Naive thymus-derived CD8-positive, alpha-beta T cell (primary cell): ENCODE measurements at regions of chr19 and their contacts with region 1.

Region 1: DNA sequence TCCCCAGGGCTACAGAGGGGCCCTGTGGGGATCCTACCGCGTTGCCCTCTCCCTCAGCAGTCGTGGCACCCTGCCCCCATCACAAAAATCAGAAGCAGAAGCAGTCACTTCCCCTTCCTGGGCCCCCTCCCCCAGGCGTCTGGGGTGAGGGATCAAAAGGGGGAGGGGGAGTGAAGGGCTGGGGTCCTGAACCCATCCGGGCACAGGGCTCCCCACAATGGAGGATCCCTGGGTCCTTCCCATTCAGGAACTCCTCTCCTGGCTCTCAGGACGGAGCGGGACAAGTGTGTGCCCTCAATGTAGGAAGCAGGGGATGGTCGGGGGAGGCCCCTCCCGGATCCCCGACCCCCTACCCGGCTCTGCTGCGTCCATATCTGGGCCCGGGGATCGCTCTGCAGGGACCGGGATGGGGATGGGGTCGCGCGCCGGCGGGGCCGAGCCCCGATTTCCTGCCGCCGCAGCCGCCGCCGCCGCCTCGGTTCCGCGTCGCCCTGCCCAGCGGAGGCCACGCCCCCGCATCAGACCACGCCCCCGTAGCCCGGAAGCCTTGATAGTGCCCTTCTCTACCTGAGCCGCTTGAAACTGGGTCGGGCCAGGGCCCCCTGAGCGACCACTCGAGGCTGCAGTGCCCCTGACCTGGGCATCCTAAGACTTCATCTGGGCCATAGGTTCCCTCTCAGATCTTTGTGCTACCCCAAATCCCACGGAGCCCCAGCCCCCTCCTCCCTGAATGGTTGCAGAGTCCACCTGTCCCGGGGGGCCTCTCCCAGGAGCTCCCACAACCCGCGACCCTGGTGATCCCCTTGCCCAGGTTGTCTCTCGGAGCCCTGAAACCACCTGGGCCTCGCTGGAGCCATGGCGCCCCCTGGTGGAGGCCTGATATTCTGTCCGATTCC is at the start of gene GMIP:
- DNase-seq: peak; percentile 77 to 94 (median 88)
- ATAC-seq: peak; percentile 91 to 92
- H3K4me3 Mint-ChIP-seq: peak within 1 kb of the TSS; percentile 96 to 99 (median 98)
- H3K27ac Mint-ChIP-seq: peak within 1 kb of the TSS; percentile 87 to 99 (median 98)
- H3K4me1 Mint-ChIP-seq: peaks cover 13 to 27% (median 20%) of the 10 kb centered on the region in 4 donors
- H3K27me3 Mint-ChIP-seq: no peaks in the 10 kb centered on the region
- polyA plus RNA-seq, gene GMIP: 40.6 to 72.4 (median 41.9) TPM

Region 2: GRCh38 chr19:19524053-19524452 is 119.4 kb before region 1 on chr19:
- POLR2A ChIA-PET with region 1: no interaction called
- DNase-seq: no peak
- ATAC-seq: no peak
- H3K4me3 Mint-ChIP-seq: no peak overlapping the region
- H3K27ac Mint-ChIP-seq: no peak overlapping the region
- H3K4me1 Mint-ChIP-seq: peaks cover 12 to 49% (median 25%) of the 10 kb centered on the region in 4 donors
- H3K27me3 Mint-ChIP-seq: no peaks in the 10 kb centered on the region

Region 3: GRCh38 chr19:19657397-19657783 is 14.0 kb after region 1 on chr19:
- POLR2A ChIA-PET with region 1: interaction called, 45 read pairs
- DNase-seq: no peak
- ATAC-seq: no peak
- H3K4me3 Mint-ChIP-seq: no peak overlapping the region
- H3K27ac Mint-ChIP-seq: peak overlapping the region in 3 of 10 donors; percentile 5 to 48 (median 46)
- H3K4me1 Mint-ChIP-seq: peaks cover 15 to 34% (median 24%) of the 10 kb centered on the region in 4 donors
- H3K27me3 Mint-ChIP-seq: no peaks in the 10 kb centered on the region

Region 4: DNA sequence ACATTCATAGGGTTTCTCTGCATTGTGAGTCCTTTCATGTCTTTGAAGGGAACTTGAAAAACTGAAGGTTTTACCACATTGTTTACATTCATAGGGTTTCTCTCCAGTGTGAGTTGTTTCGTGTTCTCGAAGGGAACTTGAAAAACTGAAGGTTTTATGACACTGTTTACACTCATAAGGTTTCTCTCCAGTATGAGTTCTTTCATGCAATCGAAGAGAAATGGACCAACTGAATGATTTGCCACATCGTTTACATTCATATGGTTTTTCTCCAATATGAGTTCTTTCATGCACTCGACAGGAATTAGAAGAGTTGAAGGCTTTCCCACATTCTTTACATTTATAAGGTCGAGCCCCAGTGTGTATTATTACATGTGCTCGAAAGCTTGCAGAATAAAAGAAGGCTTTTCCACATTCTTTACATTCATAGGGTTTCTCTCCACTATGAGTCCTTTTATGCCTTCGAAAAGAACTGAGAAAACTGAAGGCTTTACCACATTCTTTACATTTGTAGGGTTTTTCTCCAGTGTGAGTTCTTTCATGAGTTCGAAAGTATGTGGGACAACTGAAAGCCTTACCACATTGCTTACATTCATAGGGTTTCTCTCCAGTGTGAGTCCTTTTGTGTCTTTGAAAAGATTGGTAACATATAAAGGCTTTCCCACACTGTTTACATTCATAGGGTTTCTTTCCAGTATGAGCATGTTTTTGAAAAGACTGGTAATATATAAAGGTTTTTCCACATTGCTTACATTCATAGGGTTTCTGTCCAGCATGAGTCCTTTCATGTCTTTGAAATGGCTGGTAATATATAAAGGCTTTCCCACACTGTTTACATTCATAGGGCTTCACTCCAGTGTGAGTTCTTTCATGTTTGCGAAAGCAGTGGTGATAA is 68.8 kb after region 1 on chr19:
- POLR2A ChIA-PET with region 1: no interaction called
- DNase-seq: no peak
- ATAC-seq: no peak
- H3K4me3 Mint-ChIP-seq: peak overlapping the region in 2 of 10 donors; percentile 10 to 32
- H3K27ac Mint-ChIP-seq: no peak overlapping the region
- H3K4me1 Mint-ChIP-seq: no peaks in the 10 kb centered on the region
- H3K27me3 Mint-ChIP-seq: no peaks in the 10 kb centered on the region